ENCODE measurements at regions of chr1 and their contacts with region 1.

Region 1: DNA sequence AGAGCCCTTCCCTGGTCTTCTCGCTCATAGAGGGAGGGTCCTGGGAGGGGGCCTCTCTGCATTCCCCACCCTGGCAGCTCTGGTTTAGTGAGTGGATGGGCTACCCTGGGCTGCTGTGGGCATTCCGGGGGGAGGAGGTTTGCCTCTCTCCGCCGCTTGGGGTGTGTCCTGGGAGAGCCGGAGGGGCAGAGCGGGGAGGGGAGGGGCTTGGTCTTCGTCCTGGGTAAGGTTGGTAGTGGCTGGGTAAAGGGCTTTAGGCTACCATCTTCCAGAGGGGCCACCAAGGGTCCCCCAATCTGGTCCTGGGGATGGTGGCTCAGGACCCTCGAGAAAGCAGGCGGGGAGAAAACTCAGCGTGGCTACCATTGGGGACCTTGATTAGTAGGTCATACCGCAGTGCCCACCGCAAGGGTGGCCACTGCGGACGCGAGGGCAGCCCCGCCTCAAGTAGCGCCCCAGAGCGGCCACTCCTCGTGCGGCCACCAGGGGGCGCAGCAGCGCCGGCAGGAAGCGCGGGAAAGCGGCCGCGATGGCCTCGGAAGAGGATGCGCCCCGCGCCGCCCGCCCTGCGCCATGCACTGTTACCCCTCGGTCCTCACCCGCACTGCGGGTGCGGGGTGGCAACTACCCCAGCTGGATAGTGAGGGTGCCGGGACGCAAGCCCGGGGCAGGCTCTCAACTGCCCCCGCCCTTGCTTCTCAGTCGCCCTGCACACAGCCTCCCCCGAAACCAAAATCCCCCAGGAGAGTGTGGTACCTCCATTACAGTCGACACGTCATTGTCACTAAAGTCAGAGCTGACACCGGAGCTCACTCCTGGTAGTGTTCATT is 44.1 kb upstream of the SLC25A33 start:
- DNase-seq: peak; percentile 79
- ATAC-seq: peak; percentile 85
- H3K4me3 Mint-ChIP-seq: peak overlapping the region; percentile 57
- H3K27ac Mint-ChIP-seq: no peak overlapping the region
- H3K4me1 Mint-ChIP-seq: no peaks in the 10 kb centered on the region
- H3K27me3 Mint-ChIP-seq: peaks cover 37% of the 10 kb centered on the region
- CTCF ChIP-seq: peak; percentile 99

Region 2: DNA sequence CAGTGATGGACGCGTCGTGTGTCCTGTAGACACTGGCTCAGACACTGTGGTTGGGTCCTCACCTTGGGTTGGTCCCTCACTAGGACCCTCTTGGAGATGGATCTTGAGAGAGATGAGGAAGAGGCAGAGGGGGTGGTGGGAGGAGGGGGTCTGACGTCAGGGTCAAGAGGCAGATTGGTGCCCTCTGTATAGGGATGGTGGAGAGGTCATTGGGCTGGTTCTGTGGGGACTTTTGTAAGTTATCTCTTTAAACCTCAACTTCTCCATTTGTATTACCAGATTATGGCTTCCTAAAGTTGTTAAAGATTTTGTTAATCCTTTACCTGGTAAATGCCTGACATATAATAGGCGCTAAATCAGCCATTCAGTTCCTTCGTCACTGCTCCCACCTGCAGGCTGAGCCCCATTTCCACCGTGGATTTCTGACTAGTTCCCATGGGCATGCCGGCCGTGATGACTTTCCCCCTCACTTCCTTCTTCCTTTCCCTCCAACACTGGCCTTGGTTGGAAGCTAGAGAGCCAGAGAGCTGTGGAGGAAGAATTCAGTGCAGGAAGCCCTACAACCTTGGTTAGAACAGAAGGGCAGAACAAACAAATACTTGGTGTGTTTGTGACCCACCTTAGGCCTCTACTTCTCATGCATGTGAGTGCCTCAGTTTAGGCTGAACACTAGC is 251.9 kb before region 1 on chr1:
- CTCF ChIA-PET with region 1: no interaction called
- POLR2A ChIA-PET with region 1: no interaction called
- DNase-seq: no peak
- ATAC-seq: no peak
- H3K4me3 Mint-ChIP-seq: no peak overlapping the region
- H3K27ac Mint-ChIP-seq: no peak overlapping the region
- H3K4me1 Mint-ChIP-seq: peaks cover 36% of the 10 kb centered on the region
- H3K27me3 Mint-ChIP-seq: no peaks in the 10 kb centered on the region
- CTCF ChIP-seq: no peak

Region 3: DNA sequence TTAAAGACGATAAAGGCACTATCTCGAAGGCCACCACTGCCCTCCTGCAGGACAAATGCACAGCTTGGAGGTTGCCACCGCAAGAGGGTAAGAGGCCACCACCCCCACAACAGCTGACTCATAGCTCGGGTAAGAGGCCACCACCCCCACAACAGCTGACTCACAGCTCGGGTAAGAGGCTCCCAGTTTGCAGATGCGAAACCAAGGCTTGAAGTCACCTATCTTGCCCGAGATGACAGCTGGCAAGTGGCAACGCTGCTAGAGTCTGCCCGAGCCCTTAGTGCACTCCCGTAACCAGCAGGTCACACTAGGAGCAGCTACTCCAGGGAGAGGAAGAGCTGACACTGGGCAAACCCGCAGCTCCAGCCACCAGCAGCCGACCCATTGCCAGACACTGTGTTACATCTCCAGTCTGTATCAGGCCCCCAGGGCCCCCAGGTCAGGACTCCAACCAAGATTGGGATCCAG is 219.5 kb before region 1 on chr1:
- CTCF ChIA-PET with region 1: interaction called, 113 read pairs
- POLR2A ChIA-PET with region 1: no interaction called
- DNase-seq: no peak
- ATAC-seq: no peak
- H3K4me3 Mint-ChIP-seq: no peak overlapping the region
- H3K27ac Mint-ChIP-seq: no peak overlapping the region
- H3K4me1 Mint-ChIP-seq: peaks cover 28% of the 10 kb centered on the region
- H3K27me3 Mint-ChIP-seq: no peaks in the 10 kb centered on the region; the same call in 1 of the 2 replicates
- CTCF ChIP-seq: no peak

Region 4: GRCh38 chr1:9292361-9293240 is 202.5 kb before region 1 on chr1 and contains the start of gene SPSB1:
- CTCF ChIA-PET with region 1: interaction called, 82 read pairs
- POLR2A ChIA-PET with region 1: interaction called, 3 read pairs
- DNase-seq: peak; percentile 60
- ATAC-seq: peak; percentile 71
- H3K4me3 Mint-ChIP-seq: peak within 1 kb of the TSS; percentile 70
- H3K27ac Mint-ChIP-seq: no peak within 1 kb of the TSS
- H3K4me1 Mint-ChIP-seq: peaks cover 12% of the 10 kb centered on the region
- H3K27me3 Mint-ChIP-seq: peaks cover 8% of the 10 kb centered on the region
- CTCF ChIP-seq: no peak
- total RNA-seq, gene SPSB1: 4.3 to 5.5 TPM (median 4.6 TPM) in 3 replicates

Region 5: DNA sequence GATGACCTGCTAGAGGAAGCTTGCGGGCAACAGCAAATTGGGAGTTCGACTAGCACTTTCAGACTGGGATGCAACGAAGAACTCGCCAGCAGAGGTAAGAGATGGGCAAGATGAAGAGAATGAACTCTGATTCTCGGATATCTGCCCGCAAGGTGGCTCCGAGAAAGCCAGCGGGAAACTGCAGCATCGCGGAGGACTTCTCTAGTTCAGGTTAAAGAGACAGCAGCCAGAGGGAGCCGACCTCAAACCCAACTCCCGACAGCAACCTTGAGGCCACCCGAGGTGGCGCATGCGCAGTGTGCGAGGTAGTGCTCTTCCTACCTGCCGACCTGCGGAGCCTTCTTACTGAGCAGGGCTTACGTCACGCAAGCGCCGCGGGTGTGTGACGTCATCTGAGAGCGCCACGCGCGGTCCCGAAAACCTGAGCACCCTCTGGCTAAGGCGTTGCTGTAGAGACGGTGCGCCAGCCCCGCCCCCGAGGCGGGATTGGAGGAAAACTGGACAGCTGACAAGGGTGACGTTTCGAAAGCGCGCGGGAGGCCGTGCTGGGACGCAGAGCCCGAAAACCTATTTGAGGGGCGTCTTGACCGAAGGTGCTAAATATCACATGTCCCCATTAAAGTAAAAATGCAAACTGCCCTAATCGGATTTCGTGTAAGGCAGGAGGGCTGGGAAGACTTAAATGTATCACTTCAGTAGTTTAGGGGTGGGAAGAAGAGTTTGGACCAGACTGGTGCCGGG is 66.4 kb before region 1 on chr1:
- CTCF ChIA-PET with region 1: interaction called, 10 read pairs
- POLR2A ChIA-PET with region 1: no interaction called
- DNase-seq: peak; percentile 100
- ATAC-seq: peak; percentile 97
- H3K4me3 Mint-ChIP-seq: peak overlapping the region; percentile 87
- H3K27ac Mint-ChIP-seq: peak overlapping the region; percentile 97
- H3K4me1 Mint-ChIP-seq: peaks cover 21% of the 10 kb centered on the region
- H3K27me3 Mint-ChIP-seq: no peaks in the 10 kb centered on the region; the same call in 1 of the 2 replicates
- CTCF ChIP-seq: no peak

Region 6: GRCh38 chr1:9573723-9574122 is 78.6 kb after region 1 on chr1:
- CTCF ChIA-PET with region 1: interaction called, 22 read pairs
- POLR2A ChIA-PET with region 1: interaction called, 3 read pairs
- DNase-seq: no peak
- ATAC-seq: peak; percentile 43
- H3K4me3 Mint-ChIP-seq: no peak overlapping the region
- H3K27ac Mint-ChIP-seq: no peak overlapping the region
- H3K4me1 Mint-ChIP-seq: no peaks in the 10 kb centered on the region
- H3K27me3 Mint-ChIP-seq: no peaks in the 10 kb centered on the region
- CTCF ChIP-seq: 0 out of 2 replicates have a peak, but pooled peaks have one; percentile 17

Measured in WTC11 (cell line).